Esophagus muscularis mucosa (tissue), 4 donors: ENCODE measurements at regions of chr22 and their contacts with region 1.

Region 1: DNA sequence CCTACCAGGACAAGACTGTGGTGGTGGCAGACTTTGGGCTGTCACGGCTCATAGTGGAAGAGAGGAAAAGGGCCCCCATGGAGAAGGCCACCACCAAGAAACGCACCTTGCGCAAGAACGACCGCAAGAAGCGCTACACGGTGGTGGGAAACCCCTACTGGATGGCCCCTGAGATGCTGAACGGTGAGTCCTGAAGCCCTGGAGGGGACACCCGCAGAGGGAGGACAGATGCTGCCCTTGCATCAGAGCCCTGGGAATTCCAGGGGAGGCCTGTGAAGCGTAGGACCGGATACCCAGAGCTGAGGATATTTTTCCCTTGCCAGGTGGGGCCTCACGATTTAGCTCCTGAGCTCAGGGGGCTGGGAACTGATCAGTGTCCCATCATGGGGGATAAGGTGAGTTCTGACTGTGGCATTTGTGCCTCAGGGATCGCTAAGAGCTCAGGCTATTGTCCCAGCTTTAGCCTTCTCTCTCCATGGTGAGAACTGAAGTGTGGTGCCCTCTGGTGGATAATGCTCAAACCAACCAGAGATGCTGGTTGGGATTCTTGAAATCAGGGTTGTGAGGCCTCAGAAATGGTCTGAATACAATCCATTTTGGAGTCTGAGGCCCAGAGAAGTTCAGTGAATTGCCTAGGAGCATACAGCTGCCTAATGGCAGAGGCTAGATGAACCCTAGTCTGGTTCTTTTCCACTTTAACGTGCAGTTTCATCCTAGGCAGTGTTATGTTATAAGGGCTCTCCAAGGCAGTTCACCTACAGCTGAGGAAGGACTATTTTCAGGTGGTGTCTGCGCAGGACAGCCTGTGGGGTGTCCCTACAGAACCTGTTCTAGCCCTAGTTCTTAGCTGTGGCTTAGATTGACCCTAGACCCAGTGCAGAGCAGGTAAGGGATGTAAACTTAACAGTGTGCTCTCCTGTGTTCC is 19.5 kb downstream of the PIK3IP1 start:
- DNase-seq: no peak
- H3K4me3 ChIP-seq: no peak overlapping the region
- H3K27ac ChIP-seq: peak overlapping the region in 3 of 4 donors; percentile 20 to 49 (median 44)
- H3K4me1 ChIP-seq: peaks cover 0 to 5% (median 0%) of the 10 kb centered on the region in 4 donors
- H3K27me3 ChIP-seq: no peaks in the 10 kb centered on the region
- CTCF ChIP-seq: peak; percentile 70 to 83 (median 75)
- EP300 ChIP-seq: no peak
- POLR2A ChIP-seq: no peak

Region 2: DNA sequence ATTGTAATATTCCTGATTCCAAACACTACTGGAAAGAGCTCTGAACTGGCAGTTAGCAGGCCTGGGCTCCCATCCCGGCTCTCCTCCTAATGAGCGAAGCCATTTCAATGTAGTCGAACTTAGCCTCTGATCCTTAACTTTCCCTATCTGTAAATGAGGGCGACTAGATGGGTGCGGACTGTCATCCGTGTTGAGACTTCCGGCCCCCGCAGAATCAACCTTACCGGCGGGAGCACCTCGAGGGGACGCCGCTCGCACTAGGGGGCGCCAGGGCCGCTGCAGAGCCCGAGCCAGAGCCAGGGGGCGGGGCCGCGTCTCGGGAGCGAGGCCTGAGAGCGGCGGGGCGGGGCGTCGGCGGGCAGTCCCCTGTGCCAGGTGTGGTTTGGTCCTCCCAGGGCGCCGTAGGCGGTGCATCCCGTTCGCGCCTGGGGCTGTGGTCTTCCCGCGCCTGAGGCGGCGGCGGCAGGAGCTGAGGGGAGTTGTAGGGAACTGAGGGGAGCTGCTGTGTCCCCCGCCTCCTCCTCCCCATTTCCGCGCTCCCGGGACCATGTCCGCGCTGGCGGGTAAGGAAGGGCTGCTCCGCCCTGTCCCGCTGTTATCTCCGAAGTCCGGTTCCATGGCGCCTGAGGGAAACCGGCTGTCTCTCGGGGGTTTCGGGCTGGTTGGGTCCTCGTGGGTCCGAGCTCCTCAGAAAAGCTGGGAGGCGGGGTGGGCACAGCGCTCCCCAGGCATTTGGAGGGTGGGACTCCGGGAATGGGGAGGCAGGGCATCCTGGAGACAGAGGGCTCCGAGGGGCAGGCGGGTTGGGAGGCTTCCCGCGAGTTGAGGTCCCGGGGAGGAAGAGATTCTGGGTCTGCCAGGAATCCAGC is 60.7 kb before region 1 on chr22 and contains the start of gene LIMK2:
- intact Hi-C with region 1: loop called (anchors 2 kb)
- DNase-seq: peak; percentile 96
- H3K4me3 ChIP-seq: peak within 1 kb of the TSS; percentile 68 to 96 (median 92)
- H3K27ac ChIP-seq: peak within 1 kb of the TSS; percentile 78 to 86 (median 84)
- H3K4me1 ChIP-seq: peaks cover 29 to 44% (median 40%) of the 10 kb centered on the region in 4 donors
- H3K27me3 ChIP-seq: no peaks in the 10 kb centered on the region
- CTCF ChIP-seq: peak; percentile 88 to 93 (median 88)
- EP300 ChIP-seq: no peak
- POLR2A ChIP-seq: peak; percentile 74
- total RNA-seq, gene LIMK2: 12.0 to 18.2 (median 14.3) TPM